ENCODE measurements at regions of chr11 and their contacts with region 1.

Region 1: GRCh38 chr11:86041975-86042378 is 26.9 kb downstream of the PICALM start:
- DNase-seq: peak; percentile 55
- CTCF ChIP-seq: peak; percentile 80

Region 2: GRCh38 chr11:86052693-86053641 is 11.0 kb after region 1 on chr11:
- CTCF ChIA-PET with region 1: interaction called, 41 read pairs
- POLR2A ChIA-PET with region 1: interaction called, 3 read pairs
- DNase-seq: no peak
- CTCF ChIP-seq: no peak

Region 3: DNA sequence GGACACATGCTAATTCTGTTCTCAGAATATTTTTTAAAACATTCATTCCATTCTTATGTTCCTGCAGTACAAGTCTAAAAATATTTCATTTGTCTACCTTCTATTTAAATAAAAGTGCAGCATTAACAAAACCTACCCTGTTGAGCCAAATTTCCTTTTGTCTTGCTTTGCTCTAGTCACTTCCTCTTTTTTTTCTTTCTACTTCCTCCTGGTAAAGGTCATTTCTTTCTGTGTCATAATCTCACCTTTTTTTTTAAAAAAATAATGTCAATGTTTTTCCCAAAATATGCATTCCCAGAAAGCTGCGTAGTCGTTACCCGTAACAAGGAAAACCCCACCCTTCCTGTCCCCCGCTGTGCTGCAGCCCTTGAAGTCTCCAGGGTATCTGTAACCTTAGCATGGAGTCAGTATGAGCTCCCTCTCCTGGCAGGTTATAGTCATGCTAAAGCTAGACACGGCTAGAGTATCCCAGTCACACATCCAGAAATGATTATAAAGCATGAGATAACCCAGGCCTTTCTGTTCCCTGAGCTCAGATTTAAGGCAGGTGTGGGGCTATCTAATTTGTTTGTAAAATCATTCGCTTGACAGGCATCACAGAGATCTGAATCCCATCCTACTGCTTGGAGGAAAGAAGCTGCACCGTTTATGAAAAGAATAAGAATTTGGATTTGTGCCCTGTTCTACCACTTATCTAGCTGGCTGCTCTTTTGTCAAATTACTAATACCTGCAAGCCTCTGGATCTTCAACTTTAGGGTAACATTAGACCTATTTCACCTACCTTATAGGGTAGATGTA is 151.5 kb after region 1 on chr11:
- CTCF ChIA-PET with region 1: interaction called, 53 read pairs
- POLR2A ChIA-PET with region 1: no interaction called
- DNase-seq: peak; percentile 75
- CTCF ChIP-seq: peak; percentile 60

Region 4: GRCh38 chr11:86218125-86219084 is 176.4 kb after region 1 on chr11:
- CTCF ChIA-PET with region 1: interaction called, 20 read pairs
- POLR2A ChIA-PET with region 1: no interaction called
- DNase-seq: peak; percentile 48
- CTCF ChIP-seq: peak; percentile 54